ENCODE measurements at regions of chr1 and their contacts with region 1.

Region 1: DNA sequence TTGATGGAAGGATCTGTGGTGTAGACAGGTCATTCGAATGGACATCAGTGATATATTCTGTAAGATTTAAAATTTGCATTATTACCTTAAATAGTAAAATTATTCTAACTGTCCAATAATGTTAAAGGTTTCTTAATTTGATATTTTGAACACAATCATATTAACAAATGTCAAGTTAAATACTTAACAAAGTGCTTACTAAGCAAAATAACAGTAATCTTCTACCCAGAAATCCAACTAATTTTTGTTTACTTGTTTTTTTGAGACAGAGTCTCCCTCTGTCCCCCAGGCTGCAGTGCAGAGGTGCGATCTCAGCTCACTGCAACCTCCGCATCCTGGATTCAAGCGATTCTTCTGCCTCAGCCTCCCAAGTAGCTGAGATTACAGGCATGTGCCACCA is 33.9 kb downstream of the USP33 start:
- DNase-seq: no peak
- CTCF ChIP-seq: no peak

Region 2: GRCh38 chr1:77659879-77660593 is 65.7 kb before region 1 on chr1:
- in situ Hi-C with region 1: loop called (anchors 10 kb)
- DNase-seq: no peak
- CTCF ChIP-seq: no peak

Region 3: DNA sequence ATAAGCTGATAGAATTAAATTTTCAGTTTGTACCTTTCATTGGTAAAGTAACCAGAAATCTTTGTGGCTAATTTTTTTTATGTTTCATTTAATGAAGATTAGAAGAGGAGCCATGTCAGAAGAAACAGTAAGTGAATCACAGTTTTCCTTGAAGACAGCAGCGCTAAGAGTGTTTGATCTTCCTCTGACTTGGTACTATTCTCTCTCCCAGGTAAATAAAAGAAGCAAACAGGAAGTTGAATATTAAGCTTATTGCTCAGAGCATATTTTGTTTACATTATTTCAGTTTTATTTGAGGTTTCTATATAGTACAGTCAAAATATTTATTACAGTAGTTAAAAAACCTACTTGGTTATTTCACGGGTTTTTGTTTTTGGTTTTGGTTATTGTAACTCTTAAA is 57.4 kb after region 1 on chr1:
- in situ Hi-C with region 1: no loop called
- DNase-seq: no peak
- CTCF ChIP-seq: no peak

Region 4: DNA sequence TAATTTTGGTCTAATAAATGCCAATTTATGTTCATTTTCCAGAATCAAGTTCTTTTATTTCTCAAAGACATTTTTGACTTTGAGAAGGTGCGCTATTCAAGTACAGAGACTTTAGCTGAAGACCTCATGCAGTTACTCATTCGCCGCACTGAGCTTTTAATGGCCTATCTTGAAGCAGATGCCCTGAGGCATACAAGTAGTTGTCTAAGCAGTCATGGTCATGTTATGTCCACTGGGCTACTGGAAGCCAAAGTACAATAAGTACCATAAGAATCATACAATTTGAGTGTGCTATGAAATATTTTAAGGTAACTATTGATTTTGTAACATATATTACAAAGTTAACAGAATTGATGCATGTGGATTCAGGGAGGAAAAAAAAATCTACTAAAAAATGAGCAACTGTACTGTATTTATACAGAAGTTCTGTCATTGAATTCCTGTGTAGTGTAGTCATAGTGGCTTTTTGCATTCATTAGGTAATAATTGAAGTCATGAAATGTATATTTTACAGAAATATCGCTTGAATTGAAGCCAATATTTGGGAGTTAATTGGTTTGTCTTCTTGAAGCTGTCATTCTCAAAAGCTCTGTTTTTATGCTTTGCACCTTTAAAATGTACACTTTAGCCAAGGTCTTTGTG is 149.2 kb after region 1 on chr1:
- in situ Hi-C with region 1: no loop called
- DNase-seq: no peak
- CTCF ChIP-seq: no peak